Activated T-helper 1 cell treated with anti-CD3 and anti-CD28 coated beads, Interleukin-12 subunit alpha, Interleukin-12 subunit beta, Interleukin-2, Interleukin-4 antibody, amounts not matched to agents 30 ng/mL and 10 ng/mL and 1 ng/mL, durations not matched to agents 14 hours and 24 hours and 36 hours (primary cell): ENCODE measurements at regions of chr12 and their contacts with region 1.

Region 1: GRCh38 chr12:76158518-76159321 is 74.2 kb upstream of the NAP1L1 start:
- DNase-seq: peak; percentile 67
- H3K4me3 Mint-ChIP-seq: peak overlapping the region; percentile 47
- H3K27ac Mint-ChIP-seq: peak overlapping the region; percentile 84
- H3K4me1 Mint-ChIP-seq: peaks cover 18% of the 10 kb centered on the region
- H3K27me3 Mint-ChIP-seq: peaks cover 27% of the 10 kb centered on the region

Region 2: GRCh38 chr12:75390899-75391538 is 767.7 kb before region 1 on chr12 and contains the start of gene GLIPR1L2:
- intact Hi-C with region 1: loop called (anchors 2 kb)
- DNase-seq: peak; percentile 82
- H3K4me3 Mint-ChIP-seq: peak within 1 kb of the TSS; percentile 86
- H3K27ac Mint-ChIP-seq: peak within 1 kb of the TSS; percentile 79
- H3K4me1 Mint-ChIP-seq: peaks cover 39% of the 10 kb centered on the region
- H3K27me3 Mint-ChIP-seq: peaks cover 5% of the 10 kb centered on the region
- total RNA-seq, gene GLIPR1L2: not detected in 2 replicates

Region 3: DNA sequence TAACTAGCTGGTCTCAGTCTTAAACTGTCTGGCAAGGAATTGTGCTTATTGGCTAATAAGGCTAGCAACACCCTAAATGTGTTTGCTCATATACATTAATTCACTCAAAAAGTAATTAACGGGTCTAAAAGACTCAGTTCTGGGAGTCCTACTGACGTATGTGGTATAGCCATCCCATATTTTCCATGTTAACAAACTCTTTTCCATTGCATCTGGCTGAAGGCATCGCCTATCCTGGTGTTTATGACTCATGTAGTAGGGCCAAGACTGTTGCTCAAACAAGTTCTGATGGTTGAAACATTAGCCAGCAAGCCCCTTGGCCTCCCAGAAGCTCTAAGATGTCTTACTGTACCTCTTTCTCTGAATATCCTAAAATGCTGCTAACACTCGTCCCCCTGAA is 225.6 kb before region 1 on chr12:
- intact Hi-C with region 1: loop called (anchors 1 kb)
- DNase-seq: no peak
- H3K4me3 Mint-ChIP-seq: no peak overlapping the region
- H3K27ac Mint-ChIP-seq: peak overlapping the region; percentile 89
- H3K4me1 Mint-ChIP-seq: peaks cover 49% of the 10 kb centered on the region
- H3K27me3 Mint-ChIP-seq: peaks cover 4% of the 10 kb centered on the region

Region 4: GRCh38 chr12:76031537-76032073 is 127.1 kb before region 1 on chr12 and contains the start of gene PHLDA1:
- intact Hi-C with region 1: loop called (anchors 1 kb)
- DNase-seq: peak; percentile 95
- H3K4me3 Mint-ChIP-seq: peak within 1 kb of the TSS; percentile 99
- H3K27ac Mint-ChIP-seq: peak within 1 kb of the TSS; percentile 99
- H3K4me1 Mint-ChIP-seq: peaks cover 34% of the 10 kb centered on the region
- H3K27me3 Mint-ChIP-seq: peaks cover 3% of the 10 kb centered on the region
- total RNA-seq, gene PHLDA1: 88.9 and 91.5 TPM in 2 replicates

Region 5: DNA sequence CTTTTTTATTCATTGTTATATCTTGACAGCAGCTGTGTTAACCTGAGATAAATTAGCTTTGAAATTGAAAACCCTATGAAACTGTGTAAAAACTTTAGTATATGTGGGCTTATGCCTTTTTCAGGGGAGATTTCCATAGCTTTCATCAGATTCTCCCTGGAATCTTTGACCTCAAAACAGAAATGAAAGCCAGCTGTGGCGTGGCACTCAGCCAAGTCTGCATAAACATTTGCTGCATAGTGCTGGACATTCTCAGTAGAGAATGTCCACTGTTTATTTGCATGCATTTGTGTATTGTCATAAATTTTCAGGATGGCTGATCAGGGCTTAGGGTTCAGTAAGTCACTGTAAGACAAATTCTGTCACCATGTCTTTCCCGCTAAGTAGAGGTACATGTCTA is 41.1 kb after region 1 on chr12:
- intact Hi-C with region 1: no loop called
- DNase-seq: no peak
- H3K4me3 Mint-ChIP-seq: no peak overlapping the region
- H3K27ac Mint-ChIP-seq: no peak overlapping the region
- H3K4me1 Mint-ChIP-seq: no peaks in the 10 kb centered on the region
- H3K27me3 Mint-ChIP-seq: peaks cover 8% of the 10 kb centered on the region

Region 6: GRCh38 chr12:76277480-76277879 is 118.8 kb after region 1 on chr12:
- intact Hi-C with region 1: loop called (anchors 1 kb)
- DNase-seq: no peak
- H3K4me3 Mint-ChIP-seq: no peak overlapping the region
- H3K27ac Mint-ChIP-seq: no peak overlapping the region
- H3K4me1 Mint-ChIP-seq: peaks cover 15% of the 10 kb centered on the region
- H3K27me3 Mint-ChIP-seq: peaks cover 6% of the 10 kb centered on the region

Region 7: DNA sequence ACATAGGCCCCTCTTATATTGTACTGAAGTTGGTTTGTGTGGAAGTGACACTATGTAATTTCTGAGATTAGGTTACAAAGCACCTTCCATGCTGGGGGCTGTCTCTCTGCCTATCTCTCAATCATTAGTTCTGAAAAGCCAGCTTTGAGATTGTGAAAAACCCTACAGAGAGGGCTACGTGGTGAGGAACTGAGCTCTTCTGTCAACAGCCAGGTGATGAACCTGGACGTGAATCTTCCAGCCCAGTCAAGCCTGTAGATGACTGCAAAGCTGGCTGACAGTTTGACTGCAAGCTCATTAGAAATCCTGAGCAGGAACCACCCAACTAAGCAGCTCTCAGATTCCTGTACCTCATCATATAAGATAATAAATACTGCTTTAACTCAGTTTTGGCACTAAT is 225.8 kb after region 1 on chr12:
- intact Hi-C with region 1: no loop called
- DNase-seq: no peak
- H3K4me3 Mint-ChIP-seq: no peak overlapping the region
- H3K27ac Mint-ChIP-seq: no peak overlapping the region
- H3K4me1 Mint-ChIP-seq: no peaks in the 10 kb centered on the region
- H3K27me3 Mint-ChIP-seq: no peaks in the 10 kb centered on the region

Region 8: GRCh38 chr12:76763743-76764675 is 605.3 kb after region 1 on chr12 and contains the start of gene ZDHHC17:
- intact Hi-C with region 1: loop called (anchors 5 kb)
- DNase-seq: peak; percentile 91
- H3K4me3 Mint-ChIP-seq: peak within 1 kb of the TSS; percentile 98
- H3K27ac Mint-ChIP-seq: peak within 1 kb of the TSS; percentile 94
- H3K4me1 Mint-ChIP-seq: peaks cover 19% of the 10 kb centered on the region
- H3K27me3 Mint-ChIP-seq: peaks cover 3% of the 10 kb centered on the region
- total RNA-seq, gene ZDHHC17: 23.3 and 32.3 TPM in 2 replicates